OCI-LY7 (cell line): ENCODE measurements at regions of chr1 and their contacts with region 1.

Region 1: GRCh38 chr1:165597883-165598675 is 33.0 kb upstream of the MGST3 start:
- DNase-seq: peak; percentile 97
- H3K4me3 ChIP-seq: peak overlapping the region; percentile 68
- H3K27ac ChIP-seq: peak overlapping the region; percentile 16
- H3K4me1 ChIP-seq: peaks cover 31% of the 10 kb centered on the region
- CTCF ChIP-seq: no peak

Region 2: GRCh38 chr1:165144757-165145397 is 453.2 kb before region 1 on chr1:
- CTCF ChIA-PET with region 1: no interaction called
- POLR2A ChIA-PET with region 1: no interaction called
- intact Hi-C with region 1: no loop called
- DNase-seq: peak; percentile 42
- H3K4me3 ChIP-seq: no peak overlapping the region
- H3K27ac ChIP-seq: no peak overlapping the region
- H3K4me1 ChIP-seq: no peaks in the 10 kb centered on the region
- CTCF ChIP-seq: peak; percentile 92

Region 3: DNA sequence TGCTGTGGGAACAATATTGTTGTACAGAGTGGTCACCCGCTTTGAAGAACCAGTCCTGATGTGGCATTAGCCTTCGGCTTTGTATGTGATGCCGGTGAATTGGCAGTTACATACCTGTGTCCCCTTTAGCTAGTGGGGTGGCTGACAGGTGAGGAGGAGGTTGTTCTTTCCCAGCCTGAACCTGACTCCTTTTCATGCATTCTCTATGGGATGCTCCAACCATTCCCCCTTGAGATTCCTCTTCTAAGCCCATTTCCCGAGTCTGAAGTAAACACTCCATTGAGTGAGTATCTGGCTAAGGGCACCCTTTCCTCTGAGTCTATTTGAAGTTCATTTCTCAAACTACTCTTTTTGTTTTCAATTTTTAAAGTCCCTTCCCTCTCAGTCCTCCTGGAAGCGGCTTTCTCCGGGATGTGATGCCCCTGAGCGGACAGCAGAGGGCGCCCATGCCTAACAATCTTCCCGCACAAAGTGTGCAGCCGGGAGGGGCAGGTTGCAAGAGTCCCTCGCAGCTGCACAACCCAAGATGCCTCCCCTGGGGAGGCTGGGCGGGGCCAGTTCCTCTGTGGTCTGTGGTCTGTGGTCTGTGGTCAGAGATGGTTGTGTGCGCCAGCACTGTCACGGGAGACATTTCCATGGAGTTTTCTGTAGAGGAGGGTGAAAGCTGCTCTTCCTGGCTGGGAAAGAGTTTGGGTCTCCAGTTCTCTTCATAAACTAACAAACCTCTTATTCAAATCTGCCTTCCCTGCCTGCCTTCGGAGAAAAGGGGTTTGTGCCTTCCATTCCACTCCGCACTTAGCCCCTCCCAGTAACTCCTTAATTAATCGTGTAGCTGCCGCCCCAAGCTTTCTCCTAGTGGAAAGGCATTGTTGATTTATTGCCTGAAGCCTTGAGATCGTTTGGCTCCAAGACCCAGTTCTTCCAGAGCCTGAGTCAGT is 205.2 kb before region 1 on chr1:
- CTCF ChIA-PET with region 1: no interaction called
- POLR2A ChIA-PET with region 1: interaction called, 4 read pairs
- intact Hi-C with region 1: loop called (anchors 1 kb)
- DNase-seq: peak; percentile 89
- H3K4me3 ChIP-seq: no peak overlapping the region
- H3K27ac ChIP-seq: no peak overlapping the region
- H3K4me1 ChIP-seq: peaks cover 6% of the 10 kb centered on the region
- CTCF ChIP-seq: peak; percentile 95

Region 4: DNA sequence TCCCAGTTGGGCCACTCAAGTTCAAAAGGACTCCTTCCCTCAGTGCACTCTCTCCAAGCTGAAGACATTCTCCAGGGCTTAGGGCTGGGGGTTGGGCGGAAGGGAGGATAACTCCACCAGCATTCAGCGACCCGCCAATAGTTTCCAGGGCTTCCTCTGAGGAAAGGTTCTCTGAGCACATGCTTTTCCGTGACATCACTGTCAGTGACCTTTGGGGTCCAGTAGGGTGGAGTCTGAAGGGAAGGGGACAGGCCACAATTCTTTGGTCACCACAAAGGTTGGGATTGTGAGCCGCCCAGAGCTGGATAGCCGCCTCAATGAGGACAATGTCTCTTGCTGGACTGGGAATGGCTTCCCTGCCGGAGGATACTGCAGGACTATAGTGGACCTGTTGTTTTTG is 130.4 kb before region 1 on chr1:
- CTCF ChIA-PET with region 1: no interaction called
- POLR2A ChIA-PET with region 1: no interaction called
- intact Hi-C with region 1: no loop called
- DNase-seq: no peak
- H3K4me3 ChIP-seq: no peak overlapping the region
- H3K27ac ChIP-seq: no peak overlapping the region
- H3K4me1 ChIP-seq: no peaks in the 10 kb centered on the region
- CTCF ChIP-seq: no peak

Region 5: GRCh38 chr1:165630629-165631341 is 32.7 kb after region 1 on chr1 and contains the start of gene MGST3:
- CTCF ChIA-PET with region 1: no interaction called
- POLR2A ChIA-PET with region 1: interaction called, 12 read pairs
- intact Hi-C with region 1: loop called (anchors 1 kb)
- DNase-seq: peak; percentile 97
- H3K4me3 ChIP-seq: peak within 1 kb of the TSS; percentile 88
- H3K27ac ChIP-seq: peak within 1 kb of the TSS; percentile 77
- H3K4me1 ChIP-seq: peaks cover 53% of the 10 kb centered on the region
- CTCF ChIP-seq: no peak
- total RNA-seq, gene MGST3: 95.7 and 127 TPM in 2 replicates

Region 6: GRCh38 chr1:165717918-165718515 is 119.9 kb after region 1 on chr1:
- CTCF ChIA-PET with region 1: interaction called, 3 read pairs
- POLR2A ChIA-PET with region 1: interaction called, 3 read pairs
- intact Hi-C with region 1: loop called (anchors 1 kb)
- DNase-seq: peak; percentile 74
- H3K4me3 ChIP-seq: no peak overlapping the region
- H3K27ac ChIP-seq: no peak overlapping the region
- H3K4me1 ChIP-seq: no peaks in the 10 kb centered on the region
- CTCF ChIP-seq: peak; percentile 92

Region 7: GRCh38 chr1:165827268-165828102 is 229.4 kb after region 1 on chr1 and contains the start of gene UCK2:
- CTCF ChIA-PET with region 1: no interaction called
- POLR2A ChIA-PET with region 1: interaction called, 7 read pairs
- intact Hi-C with region 1: loop called (anchors 5 kb)
- DNase-seq: peak; percentile 81
- H3K4me3 ChIP-seq: peak within 1 kb of the TSS; percentile 84
- H3K27ac ChIP-seq: peak within 1 kb of the TSS; percentile 85
- H3K4me1 ChIP-seq: peaks cover 14% of the 10 kb centered on the region
- CTCF ChIP-seq: no peak; the same call in 1 of the 2 replicates
- total RNA-seq, gene UCK2: 65.6 and 75.8 TPM in 2 replicates